ENCODE measurements at regions of chrX and their contacts with region 1.

Region 1: DNA sequence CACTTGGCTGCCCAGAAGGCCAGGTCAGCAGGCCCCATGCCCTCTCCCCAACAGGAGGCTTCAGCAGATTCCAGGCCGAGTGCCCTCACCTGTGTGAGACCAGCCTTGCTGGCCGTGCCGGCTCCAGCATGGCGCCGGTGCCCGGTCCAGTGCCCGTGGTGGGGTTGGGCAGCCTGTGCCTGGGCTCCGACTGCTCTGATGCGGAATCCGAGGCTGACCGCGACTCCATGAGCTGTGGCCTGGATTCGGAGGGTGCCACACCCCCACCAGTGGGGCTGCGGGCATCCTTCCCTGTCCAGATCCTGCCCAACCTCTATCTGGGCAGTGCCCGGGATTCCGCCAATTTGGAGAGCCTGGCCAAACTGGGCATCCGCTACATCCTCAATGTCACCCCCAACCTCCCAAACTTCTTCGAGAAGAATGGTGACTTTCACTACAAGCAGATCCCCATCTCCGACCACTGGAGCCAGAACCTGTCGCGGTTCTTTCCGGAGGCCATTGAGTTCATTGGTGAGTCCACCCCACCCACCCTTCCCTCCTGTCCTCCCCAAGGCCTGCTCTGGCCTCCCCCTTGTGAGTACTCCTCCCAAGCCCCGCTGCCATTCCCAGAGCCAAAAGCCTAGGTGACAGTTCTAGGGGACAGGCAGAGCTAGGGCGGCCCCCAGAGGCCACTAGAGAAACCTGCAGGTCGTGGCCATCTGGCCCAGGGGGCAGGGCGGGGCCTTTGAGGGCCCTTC is 2.3 kb downstream of the DUSP9 start:
- DNase-seq: peak in 4 of 5 donors; percentile 28 to 43 (median 40)
- H3K4me3 ChIP-seq: no peak overlapping the region
- H3K4me3 Mint-ChIP-seq: no peak overlapping the region
- H3K27ac ChIP-seq: no peak overlapping the region
- H3K27ac Mint-ChIP-seq: no peak overlapping the region
- H3K4me1 ChIP-seq: no peaks in the 10 kb centered on the region
- H3K4me1 Mint-ChIP-seq: no peaks in the 10 kb centered on the region
- H3K27me3 ChIP-seq: peaks cover 3% of the 10 kb centered on the region
- H3K27me3 Mint-ChIP-seq: peaks cover 4 to 6% of the 10 kb centered on the region in 2 donors

Region 2: DNA sequence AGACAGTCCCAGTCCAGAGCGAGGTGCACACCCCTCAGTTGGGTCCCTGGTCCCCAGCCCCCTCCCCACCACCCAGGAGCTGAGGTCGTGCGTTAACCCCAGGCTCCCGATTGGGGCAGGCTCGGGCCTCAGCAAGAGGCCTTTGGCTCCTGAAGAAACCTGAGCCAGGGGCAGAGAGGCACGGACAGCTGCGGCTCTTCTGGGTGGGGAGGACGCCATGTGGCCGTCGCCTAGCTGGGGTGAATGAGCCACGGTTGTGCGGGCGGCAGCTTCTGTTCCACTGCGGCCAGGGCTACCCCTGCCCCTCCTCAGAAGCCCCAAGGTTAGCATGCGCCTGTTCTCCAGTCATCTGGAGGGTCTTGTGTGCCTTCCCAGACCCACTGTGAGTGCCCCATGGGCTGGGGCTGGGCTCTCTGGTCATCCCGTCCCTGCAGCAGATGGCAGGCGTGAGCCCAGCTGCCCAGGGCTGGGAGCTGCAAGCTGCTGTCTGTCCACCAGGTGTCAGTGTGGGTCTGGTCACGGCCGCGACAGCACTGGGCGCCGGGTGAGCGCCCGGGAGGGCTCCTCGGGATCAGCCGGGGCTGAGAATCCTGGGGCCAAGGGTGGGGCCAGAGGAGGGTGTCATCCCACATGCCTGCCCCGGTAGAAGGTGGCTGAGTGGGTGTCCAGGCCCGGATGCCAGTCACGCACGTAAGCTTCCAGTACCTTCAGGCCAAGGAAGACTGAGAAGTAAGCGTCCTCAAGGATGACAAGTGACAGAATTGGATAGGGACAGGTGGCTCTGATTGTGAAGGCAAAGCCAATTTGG is 110.0 kb before region 1 on chrX:
- CTCF ChIA-PET with region 1: interaction called, 17 read pairs
- POLR2A ChIA-PET with region 1: no interaction called
- intact Hi-C with region 1: loop called (anchors 1 kb)
- DNase-seq: peak; percentile 50 to 58 (median 51)
- H3K4me3 ChIP-seq: no peak overlapping the region
- H3K4me3 Mint-ChIP-seq: no peak overlapping the region
- H3K27ac ChIP-seq: no peak overlapping the region
- H3K27ac Mint-ChIP-seq: no peak overlapping the region
- H3K4me1 ChIP-seq: no peaks in the 10 kb centered on the region
- H3K4me1 Mint-ChIP-seq: no peaks in the 10 kb centered on the region
- H3K27me3 ChIP-seq: no peaks in the 10 kb centered on the region
- H3K27me3 Mint-ChIP-seq: no peaks in the 10 kb centered on the region

Region 3: GRCh38 chrX:153554519-153555167 is 94.7 kb before region 1 on chrX:
- CTCF ChIA-PET with region 1: interaction called, 20 read pairs
- POLR2A ChIA-PET with region 1: no interaction called
- intact Hi-C with region 1: loop called (anchors 1 kb)
- DNase-seq: peak; percentile 51 to 59 (median 53)
- H3K4me3 ChIP-seq: no peak overlapping the region
- H3K4me3 Mint-ChIP-seq: no peak overlapping the region
- H3K27ac ChIP-seq: no peak overlapping the region
- H3K27ac Mint-ChIP-seq: no peak overlapping the region
- H3K4me1 ChIP-seq: no peaks in the 10 kb centered on the region
- H3K4me1 Mint-ChIP-seq: no peaks in the 10 kb centered on the region
- H3K27me3 ChIP-seq: no peaks in the 10 kb centered on the region
- H3K27me3 Mint-ChIP-seq: no peaks in the 10 kb centered on the region

Measured in CD4-positive, alpha-beta memory T cell (primary cell).